HAP-1 (cell line): ENCODE measurements at regions of chr16 and their contacts with region 1.

Region 1: DNA sequence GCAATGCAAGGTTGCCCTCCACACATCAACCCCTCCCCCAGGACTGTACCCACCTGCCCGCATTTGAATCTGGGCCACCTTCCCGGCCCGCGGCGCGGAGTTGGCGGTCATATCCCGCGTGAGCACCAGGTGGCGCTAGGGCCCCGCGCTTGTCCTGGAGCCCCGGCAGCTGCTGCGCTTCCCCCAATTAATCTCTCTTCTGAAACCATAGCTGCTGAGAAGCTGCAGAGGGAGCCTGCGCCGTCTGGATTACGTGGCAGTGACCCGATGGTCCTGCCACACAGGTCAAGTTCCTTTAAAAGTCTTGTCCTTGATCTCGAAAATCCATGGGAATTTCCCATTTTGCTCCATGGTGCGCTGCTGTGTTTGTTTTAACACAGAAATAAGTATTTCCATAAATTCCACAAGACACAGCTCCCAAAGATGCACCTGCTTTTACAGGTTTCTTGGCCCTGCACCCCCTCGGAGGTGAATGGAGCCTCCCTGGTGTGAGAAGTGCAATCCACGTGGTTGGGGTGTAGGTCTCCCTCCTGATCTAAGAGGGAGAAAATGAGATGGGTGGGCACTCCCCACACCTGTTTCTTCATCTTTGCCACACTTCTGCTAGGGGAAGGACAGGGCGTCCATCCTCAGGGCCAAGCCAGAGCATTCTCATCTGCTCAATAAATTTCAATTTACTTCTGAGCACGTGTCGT is 22.1 kb downstream of the COX4I1 start:
- DNase-seq: peak; percentile 79 to 84
- H3K4me3 ChIP-seq: no peak overlapping the region
- H3K4me1 ChIP-seq: no peaks in the 10 kb centered on the region
- H3K27me3 ChIP-seq: peaks cover 6% of the 10 kb centered on the region; the same call in 1 of the 2 replicates

Region 2: GRCh38 chr16:85330694-85331188 is 490.8 kb before region 1 on chr16:
- in situ Hi-C with region 1: no loop called
- DNase-seq: peak; percentile 72 to 87
- H3K4me3 ChIP-seq: no peak overlapping the region
- H3K4me1 ChIP-seq: peaks cover 49% of the 10 kb centered on the region
- H3K27me3 ChIP-seq: no peaks in the 10 kb centered on the region

Region 3: DNA sequence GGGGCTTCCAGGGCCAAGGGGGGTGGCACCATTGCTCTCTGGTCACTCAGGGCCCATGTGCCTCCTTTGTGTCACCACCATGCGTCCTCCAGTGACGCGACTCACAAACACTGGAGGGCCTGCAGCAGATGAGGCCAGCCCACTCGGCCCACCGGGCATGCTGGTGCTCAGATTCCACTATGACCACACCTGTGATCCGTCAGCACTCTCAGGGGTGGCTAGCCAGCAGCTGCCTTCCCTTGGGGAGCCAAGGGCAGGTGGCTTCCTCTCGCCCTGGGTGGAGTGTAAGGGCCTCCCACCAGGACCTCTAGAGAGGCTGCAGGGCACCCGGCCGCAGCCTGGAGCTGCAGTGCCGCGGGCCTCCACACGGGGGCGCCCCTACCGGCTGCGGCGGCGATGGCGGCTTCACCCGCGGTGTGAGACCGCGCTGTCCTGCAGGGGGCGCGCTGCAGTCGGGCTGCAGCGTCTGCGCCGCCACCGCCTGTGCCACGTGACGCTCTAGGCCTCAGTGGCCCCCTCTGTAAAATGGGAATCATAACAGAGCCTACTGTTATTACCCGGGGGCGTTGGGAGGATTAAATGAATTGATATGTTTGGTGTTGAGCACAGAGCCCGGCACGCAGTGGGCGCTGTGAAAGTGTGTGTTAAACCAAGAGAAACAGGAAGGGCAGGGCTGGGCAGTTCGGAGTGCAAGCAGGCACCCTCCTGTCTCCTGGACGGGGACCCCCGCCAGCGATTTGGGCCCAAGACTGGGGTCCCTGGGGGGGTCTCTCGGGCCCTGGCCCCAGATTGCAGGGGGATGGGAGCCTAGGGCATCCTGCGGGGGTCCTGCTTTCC is 400.9 kb before region 1 on chr16:
- in situ Hi-C with region 1: no loop called
- DNase-seq: peak; percentile 42 to 82
- H3K4me3 ChIP-seq: no peak overlapping the region
- H3K4me1 ChIP-seq: no peaks in the 10 kb centered on the region; the same call in 1 of the 2 replicates
- H3K27me3 ChIP-seq: no peaks in the 10 kb centered on the region

Region 4: DNA sequence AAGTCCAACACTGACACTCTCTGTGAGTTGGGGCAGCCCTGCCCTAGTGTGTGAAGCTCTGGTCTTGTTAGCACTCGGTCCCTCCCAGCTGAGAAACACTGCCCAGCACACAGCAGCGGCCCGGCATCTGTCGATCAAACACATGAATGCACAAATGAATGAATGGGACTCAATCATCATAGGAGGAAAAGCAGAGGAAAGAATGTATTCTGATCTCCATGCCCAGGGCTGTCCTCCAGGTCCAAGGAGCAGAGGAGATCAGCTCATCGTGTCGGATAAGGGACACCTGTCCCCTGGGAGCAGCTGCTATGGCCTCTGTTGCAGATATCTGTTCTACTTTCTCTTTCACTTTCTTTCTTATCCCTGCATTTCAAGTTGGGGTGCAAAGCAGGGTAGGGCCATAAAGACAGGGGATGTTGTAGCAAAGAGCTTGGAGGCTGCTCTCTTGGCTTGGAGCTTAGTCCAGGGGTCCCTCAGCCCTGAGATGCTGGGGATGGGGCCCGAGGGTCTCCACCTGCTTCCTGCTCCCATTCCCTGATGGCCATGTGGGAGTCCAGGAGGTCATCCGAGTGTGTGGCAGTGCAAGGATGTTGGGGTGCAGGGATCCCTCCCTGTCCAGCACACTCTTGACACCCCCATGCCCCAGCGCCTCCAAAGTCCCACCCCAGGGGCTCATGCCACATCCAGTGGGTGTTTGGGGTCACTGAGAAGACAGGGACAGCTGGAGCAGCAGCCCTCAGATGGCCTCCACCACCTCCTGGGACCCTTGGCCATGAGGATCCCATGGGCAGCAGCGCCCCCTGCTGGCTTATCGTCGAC is 165.6 kb after region 1 on chr16:
- in situ Hi-C with region 1: loop called (anchors 5 kb)
- DNase-seq: peak in 1 of 2 experiments; percentile 68
- H3K4me3 ChIP-seq: no peak overlapping the region
- H3K4me1 ChIP-seq: no peaks in the 10 kb centered on the region
- H3K27me3 ChIP-seq: peaks cover 55% of the 10 kb centered on the region

Region 5: DNA sequence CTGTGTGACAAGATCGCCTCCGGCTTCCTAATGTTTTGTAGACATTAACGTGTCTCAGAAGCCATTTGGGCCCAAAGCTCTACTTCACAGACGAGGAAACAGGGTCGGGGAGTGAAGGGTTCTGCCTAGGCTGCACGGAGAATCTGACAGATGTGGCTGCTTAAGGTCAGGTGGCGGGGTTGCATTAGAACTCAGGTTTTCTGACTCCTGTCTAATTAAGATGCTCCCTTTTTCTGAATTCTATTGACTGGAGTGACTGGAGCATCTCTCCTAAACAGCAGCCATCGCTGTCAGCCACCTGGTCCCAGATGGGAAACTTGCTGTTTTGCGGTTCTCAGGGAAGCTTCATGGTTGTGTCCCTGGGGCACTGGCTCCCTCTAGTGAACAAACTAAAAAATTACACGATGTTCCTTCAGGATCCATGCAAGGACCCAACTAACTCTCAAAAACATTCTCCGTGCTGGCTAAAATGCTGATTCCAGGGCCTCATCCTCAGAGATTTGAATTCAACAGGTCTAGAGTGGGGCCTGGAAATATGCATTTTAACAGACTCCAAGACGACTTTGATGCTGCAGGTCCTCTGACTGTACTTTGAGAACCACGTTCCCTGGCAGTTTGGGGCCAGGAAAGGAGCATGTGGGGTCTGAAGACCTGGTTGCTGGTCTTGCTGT is 194.7 kb after region 1 on chr16:
- in situ Hi-C with region 1: loop called (anchors 10 kb)
- DNase-seq: peak; percentile 57 to 58
- H3K4me3 ChIP-seq: no peak overlapping the region
- H3K4me1 ChIP-seq: no peaks in the 10 kb centered on the region
- H3K27me3 ChIP-seq: no peaks in the 10 kb centered on the region

Region 6: DNA sequence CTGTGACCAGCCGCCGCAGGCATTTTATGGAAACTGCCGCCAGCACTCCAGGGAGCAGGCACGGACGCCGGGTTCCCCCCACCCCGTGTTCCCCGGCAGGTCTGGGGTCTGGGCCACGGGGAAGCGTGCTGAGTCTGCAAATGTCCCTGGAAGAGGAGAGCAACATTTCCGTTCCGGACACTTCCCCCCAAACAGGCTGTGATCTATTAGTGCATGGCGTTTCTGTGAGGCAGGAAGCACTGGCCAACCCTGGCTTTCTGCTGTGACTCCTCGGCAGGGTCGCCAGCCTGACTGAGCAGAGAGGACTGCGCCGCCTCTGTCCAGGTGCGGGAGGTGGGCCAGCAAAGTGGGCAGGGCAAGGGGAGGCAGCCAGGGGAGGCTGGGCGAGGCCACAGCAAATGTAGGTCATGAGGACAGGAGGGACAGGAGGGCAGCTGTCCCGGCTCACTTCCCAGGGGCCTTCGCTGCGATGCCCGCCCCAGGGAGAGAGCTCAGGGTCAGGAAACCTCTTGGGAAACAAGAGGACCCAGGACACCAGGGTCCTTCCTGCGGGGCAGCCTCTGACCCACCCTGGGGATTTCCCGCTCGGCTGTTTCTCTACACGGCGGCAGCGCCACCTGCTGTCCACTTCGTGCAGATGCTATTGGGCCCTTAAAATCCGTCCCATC is 698.2 kb after region 1 on chr16:
- in situ Hi-C with region 1: loop called (anchors 10 kb)
- DNase-seq: peak; percentile 62 to 81
- H3K4me3 ChIP-seq: no peak overlapping the region
- H3K4me1 ChIP-seq: no peaks in the 10 kb centered on the region
- H3K27me3 ChIP-seq: peaks cover 36% of the 10 kb centered on the region